Heart left ventricle (tissue), 16 donors: ENCODE measurements at regions of chr14 and their contacts with region 1.

Region 1: GRCh38 chr14:89973234-89973823 is 17.6 kb downstream of the TDP1 start:
- DNase-seq: peak; percentile 27 to 73 (median 68)
- ATAC-seq: peak in 3 of 4 donors; percentile 87 to 88 (median 87)
- H3K4me3 ChIP-seq: no peak overlapping the region
- H3K27ac ChIP-seq: no peak overlapping the region
- H3K4me1 ChIP-seq: no peaks in the 10 kb centered on the region
- H3K27me3 ChIP-seq: no peaks in the 10 kb centered on the region
- CTCF ChIP-seq: peak; percentile 71 to 92 (median 82)
- POLR2A ChIP-seq: no peak

Region 2: DNA sequence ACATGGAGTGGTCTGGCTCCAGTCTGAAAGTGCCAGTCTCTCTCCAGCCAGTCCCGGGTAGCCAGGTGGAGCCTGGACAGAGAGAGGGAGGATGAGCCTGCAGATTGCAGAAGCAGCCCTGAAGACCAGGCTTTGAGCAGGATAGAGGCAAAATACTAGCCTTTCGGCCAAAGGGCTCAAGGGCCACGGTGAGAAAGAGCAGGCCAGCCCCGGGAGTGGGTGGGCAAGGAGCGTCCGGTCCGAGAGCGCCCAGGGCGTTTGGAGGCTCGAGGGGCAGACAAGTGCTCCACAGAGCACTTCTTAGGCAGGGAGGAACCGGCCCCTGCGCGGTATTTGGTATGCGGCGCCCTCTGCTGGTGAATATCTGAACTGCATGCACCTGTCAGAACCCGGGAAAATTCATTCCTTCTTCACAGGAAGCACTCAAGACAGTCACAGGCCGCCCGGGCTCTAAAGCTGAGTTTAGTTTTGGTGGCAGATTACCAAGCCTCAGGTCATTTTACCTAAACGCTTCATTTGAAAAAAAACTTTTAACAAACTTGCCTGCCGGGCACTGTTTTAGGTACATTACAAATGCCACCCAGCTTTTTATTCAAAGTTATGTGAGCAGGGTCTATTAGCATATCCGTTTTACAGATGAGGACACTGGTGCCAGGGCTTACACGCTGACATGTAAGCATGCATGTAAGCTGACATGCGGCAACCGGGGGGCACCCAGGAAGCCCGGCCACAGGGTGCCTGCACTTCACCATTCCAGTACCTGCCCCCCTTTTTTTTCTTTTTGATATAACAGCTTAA is 262.0 kb after region 1 on chr14:
- intact Hi-C with region 1: loop called in 9 of 10 experiments (anchors 1 to 5 kb)
- DNase-seq: peak; percentile 34 to 82 (median 55)
- ATAC-seq: peak; percentile 37 to 89 (median 82)
- H3K4me3 ChIP-seq: no peak overlapping the region
- H3K27ac ChIP-seq: no peak overlapping the region
- H3K4me1 ChIP-seq: peaks cover 0 to 4% (median 0%) of the 10 kb centered on the region in 12 donors
- H3K27me3 ChIP-seq: peaks cover 0 to 4% (median 0%) of the 10 kb centered on the region in 9 donors
- CTCF ChIP-seq: peak; percentile 77 to 99 (median 89)
- POLR2A ChIP-seq: no peak